ENCODE measurements at regions of chr14 and their contacts with region 1.

Region 1: DNA sequence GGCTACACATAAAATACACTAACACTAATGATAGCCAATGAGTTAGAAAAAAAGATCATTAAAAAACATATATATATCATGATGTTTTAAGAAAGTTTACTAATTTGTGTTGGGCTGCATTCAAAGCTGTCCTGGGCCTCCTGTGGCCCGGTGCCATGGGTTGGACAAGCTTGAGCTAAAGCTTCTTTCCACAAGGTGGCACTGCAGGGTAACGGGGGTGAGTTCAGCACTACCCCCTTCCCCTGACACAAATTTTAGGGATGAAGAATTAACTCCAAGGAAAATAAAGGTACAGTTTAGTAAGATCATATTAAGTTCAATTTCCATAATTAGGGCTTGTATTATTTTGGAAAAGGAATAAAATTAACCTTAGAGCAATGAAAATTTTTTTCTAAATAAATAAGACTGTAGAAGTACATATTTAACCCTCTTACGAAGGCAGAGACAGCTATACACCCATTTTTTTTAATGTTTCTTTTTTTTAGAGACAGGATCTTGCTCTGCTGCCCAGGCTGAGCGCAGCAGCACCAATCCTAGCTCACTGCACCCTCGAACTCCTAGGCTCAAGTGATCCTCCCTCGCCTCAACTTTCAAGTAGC is 38.9 kb downstream of the PPP1R13B start:
- DNase-seq: peak; percentile 79
- ATAC-seq: peak; percentile 96
- H3K4me3 ChIP-seq: no peak overlapping the region
- H3K27ac ChIP-seq: no peak overlapping the region
- H3K4me1 ChIP-seq: no peaks in the 10 kb centered on the region
- H3K27me3 ChIP-seq: no peaks in the 10 kb centered on the region
- CTCF ChIP-seq: peak; percentile 93

Region 2: GRCh38 chr14:103910262-103910935 is 101.9 kb after region 1 on chr14:
- intact Hi-C with region 1: loop called (anchors 10 kb)
- DNase-seq: peak; percentile 93
- ATAC-seq: peak; percentile 100
- H3K4me3 ChIP-seq: no peak overlapping the region
- H3K27ac ChIP-seq: no peak overlapping the region
- H3K4me1 ChIP-seq: peaks cover 7% of the 10 kb centered on the region
- H3K27me3 ChIP-seq: no peaks in the 10 kb centered on the region
- CTCF ChIP-seq: peak; percentile 77